ENCODE measurements at regions of chr6 and their contacts with region 1.

Region 1: GRCh38 chr6:161418463-161418945 is 144.6 kb upstream of the AGPAT4 start:
- DNase-seq: peak in 1 of 2 experiments; percentile 70
- ATAC-seq: peak; percentile 75 to 82; a peak in 5 of 6 replicates
- H3K4me3 ChIP-seq: no peak overlapping the region
- H3K27ac ChIP-seq: peak overlapping the region; percentile 59 to 83; a peak in 5 of 6 replicates
- H3K4me1 ChIP-seq: peaks cover 21% of the 10 kb centered on the region
- CTCF ChIP-seq: peak; percentile 69
- EP300 ChIP-seq: no peak
- POLR2A ChIP-seq: no peak
- RAD21 ChIP-seq: peak; percentile 81 to 82

Region 2: GRCh38 chr6:161406646-161407045 is 11.9 kb before region 1 on chr6:
- CTCF ChIA-PET with region 1: interaction called, 18 read pairs
- POLR2A ChIA-PET with region 1: interaction called, 4 read pairs
- DNase-seq: peak in 1 of 2 experiments; percentile 70
- ATAC-seq: peak; percentile 60 to 85; a peak in 4 of 6 replicates
- H3K4me3 ChIP-seq: no peak overlapping the region
- H3K27ac ChIP-seq: peak overlapping the region; percentile 70 to 82
- H3K4me1 ChIP-seq: peaks cover 13% of the 10 kb centered on the region
- CTCF ChIP-seq: no peak
- EP300 ChIP-seq: peak; percentile 19 to 76; a peak in 2 of 5 replicates
- POLR2A ChIP-seq: no peak
- RAD21 ChIP-seq: no peak

Region 3: GRCh38 chr6:161439093-161439492 is 20.6 kb after region 1 on chr6:
- CTCF ChIA-PET with region 1: interaction called, 13 read pairs
- POLR2A ChIA-PET with region 1: interaction called, 3 read pairs
- DNase-seq: peak; percentile 47 to 63
- ATAC-seq: peak; percentile 66 to 70; a peak in 5 of 6 replicates
- H3K4me3 ChIP-seq: peak overlapping the region; percentile 20; the same call in 1 of the 3 replicates
- H3K27ac ChIP-seq: peak overlapping the region; percentile 69 to 95
- H3K4me1 ChIP-seq: peaks cover 42% of the 10 kb centered on the region
- CTCF ChIP-seq: no peak
- EP300 ChIP-seq: no peak
- POLR2A ChIP-seq: no peak
- RAD21 ChIP-seq: no peak

Region 4: DNA sequence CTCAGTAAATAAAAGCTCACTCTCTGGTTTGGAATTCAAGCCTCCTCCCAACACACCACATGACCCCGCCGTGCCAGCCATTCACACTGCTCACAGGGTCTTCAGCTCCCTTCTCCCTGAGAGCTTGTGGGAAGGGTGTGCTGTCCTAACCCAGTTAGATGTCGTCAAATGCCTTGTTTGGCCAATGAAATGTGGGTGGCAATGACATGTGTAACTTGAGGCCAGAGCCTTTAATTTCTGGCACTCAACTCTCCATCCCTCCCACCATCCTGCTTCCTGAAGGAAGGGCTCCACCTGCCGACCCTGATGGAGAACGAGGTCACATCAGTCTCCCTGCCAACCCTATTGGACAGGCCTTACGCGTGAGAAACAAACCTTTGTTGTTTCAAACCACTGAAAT is 79.9 kb after region 1 on chr6:
- CTCF ChIA-PET with region 1: interaction called, 48 read pairs
- POLR2A ChIA-PET with region 1: interaction called, 4 read pairs
- DNase-seq: peak; percentile 18 to 68
- ATAC-seq: peak; percentile 77 to 98
- H3K4me3 ChIP-seq: no peak overlapping the region
- H3K27ac ChIP-seq: peak overlapping the region in 1 of 2 experiments; percentile 67; a peak in 3 of 6 replicates
- H3K4me1 ChIP-seq: no peaks in the 10 kb centered on the region
- CTCF ChIP-seq: peak; percentile 48
- EP300 ChIP-seq: no peak
- POLR2A ChIP-seq: no peak
- RAD21 ChIP-seq: peak; percentile 75 to 83